Heart left ventricle (tissue), 16 donors: ENCODE measurements at regions of chr1 and their contacts with region 1.

Region 1: DNA sequence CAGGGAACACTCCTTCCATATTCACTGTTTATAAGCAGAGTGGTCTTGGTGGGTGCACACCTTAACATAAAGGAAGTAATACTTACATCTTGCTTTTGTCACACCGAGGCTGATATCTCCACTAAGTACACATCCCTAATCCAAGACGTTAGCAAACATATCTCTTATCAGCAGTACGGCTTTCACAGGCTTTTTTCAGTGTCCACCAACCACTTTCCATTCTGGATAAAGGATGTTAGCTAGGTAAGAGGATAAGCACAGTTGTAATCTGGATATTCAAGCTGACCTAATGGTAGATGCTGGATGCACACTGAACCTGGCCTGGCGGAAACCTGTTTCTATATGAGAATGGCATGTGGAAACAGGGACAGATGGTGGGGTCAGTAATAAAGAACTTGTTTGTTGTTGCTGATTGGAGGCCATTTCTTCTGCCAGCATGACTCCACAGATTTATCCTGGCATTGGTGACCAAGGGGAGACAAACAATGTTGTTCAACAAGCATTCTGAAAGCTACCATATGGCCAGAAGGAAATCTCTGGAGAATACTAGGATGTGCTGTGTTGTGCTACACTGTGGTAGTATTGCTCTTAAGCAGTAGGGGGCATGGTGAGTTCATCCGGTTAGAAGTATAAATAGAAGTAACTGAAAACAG is 416.4 kb downstream of the PTBP2 start:
- DNase-seq: peak in 4 of 5 donors; percentile 22 to 33 (median 30)
- ATAC-seq: peak; percentile 78 to 97 (median 96)
- H3K4me3 ChIP-seq: peak overlapping the region in 8 of 12 donors; percentile 17 to 49 (median 36)
- H3K27ac ChIP-seq: peak overlapping the region in 2 of 12 donors; percentile 33 to 36
- H3K4me1 ChIP-seq: peaks cover 0 to 14% (median 8%) of the 10 kb centered on the region in 12 donors
- H3K27me3 ChIP-seq: no peaks in the 10 kb centered on the region
- CTCF ChIP-seq: peak; percentile 50 to 77 (median 66)
- POLR2A ChIP-seq: no peak

Region 2: GRCh38 chr1:97314685-97315084 is 176.7 kb after region 1 on chr1:
- intact Hi-C with region 1: no loop called
- DNase-seq: no peak
- ATAC-seq: peak in 1 of 4 donors; percentile 44
- H3K4me3 ChIP-seq: no peak overlapping the region
- H3K27ac ChIP-seq: no peak overlapping the region
- H3K4me1 ChIP-seq: no peaks in the 10 kb centered on the region
- H3K27me3 ChIP-seq: no peaks in the 10 kb centered on the region
- CTCF ChIP-seq: peak in 1 of 12 donors; percentile 6
- POLR2A ChIP-seq: no peak

Region 3: DNA sequence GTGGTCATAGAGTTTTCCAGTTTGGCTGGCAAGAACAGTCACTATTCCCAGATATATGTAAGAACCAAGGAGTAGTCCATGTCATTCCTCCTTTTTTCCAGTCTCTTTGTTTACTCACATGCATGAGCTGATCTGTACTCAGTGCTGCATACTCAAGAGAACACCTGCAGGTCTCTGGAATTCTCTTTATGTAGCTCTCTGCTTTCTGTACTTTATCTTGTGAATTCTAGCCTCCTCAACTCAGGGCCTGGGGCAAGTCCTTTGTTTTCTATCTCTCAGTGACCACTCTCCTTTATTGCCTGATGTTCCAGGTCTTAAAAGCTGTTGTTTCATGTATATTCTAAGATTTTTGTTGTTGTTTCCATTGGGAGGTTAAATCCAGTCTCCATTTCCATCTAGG is 304.0 kb after region 1 on chr1:
- intact Hi-C with region 1: no loop called
- DNase-seq: no peak
- ATAC-seq: no peak
- H3K4me3 ChIP-seq: no peak overlapping the region
- H3K27ac ChIP-seq: no peak overlapping the region
- H3K4me1 ChIP-seq: no peaks in the 10 kb centered on the region
- H3K27me3 ChIP-seq: no peaks in the 10 kb centered on the region
- CTCF ChIP-seq: no peak
- POLR2A ChIP-seq: no peak

Region 4: DNA sequence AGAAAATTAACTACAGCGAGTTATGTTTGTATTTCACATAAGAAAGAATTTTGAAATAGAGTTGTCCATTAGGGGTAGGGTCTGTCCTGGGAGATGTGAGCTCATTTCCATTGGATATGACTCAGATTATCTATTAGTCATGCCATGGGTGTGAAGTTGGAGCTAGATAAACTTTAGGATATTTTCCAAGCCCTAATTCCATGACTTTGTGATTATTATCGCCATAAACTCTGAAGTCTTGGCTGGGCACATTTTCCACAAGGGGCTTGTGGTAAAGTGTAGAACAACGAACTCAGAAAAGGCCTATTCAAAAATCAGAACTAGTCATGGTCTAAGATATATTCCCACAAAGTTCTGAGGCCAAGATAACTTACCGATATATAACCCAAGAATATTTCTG is 386.2 kb after region 1 on chr1:
- intact Hi-C with region 1: loop called in 1 of 10 experiments (anchors 10 kb)
- DNase-seq: no peak
- ATAC-seq: no peak
- H3K4me3 ChIP-seq: no peak overlapping the region
- H3K27ac ChIP-seq: no peak overlapping the region
- H3K4me1 ChIP-seq: no peaks in the 10 kb centered on the region
- H3K27me3 ChIP-seq: no peaks in the 10 kb centered on the region
- CTCF ChIP-seq: no peak
- POLR2A ChIP-seq: no peak

Region 5: GRCh38 chr1:97814121-97814520 is 676.1 kb after region 1 on chr1:
- intact Hi-C with region 1: loop called in 1 of 10 experiments (anchors 10 kb)
- DNase-seq: no peak
- ATAC-seq: no peak
- H3K4me3 ChIP-seq: no peak overlapping the region
- H3K27ac ChIP-seq: no peak overlapping the region
- H3K4me1 ChIP-seq: peaks cover 0 to 3% (median 0%) of the 10 kb centered on the region in 12 donors
- H3K27me3 ChIP-seq: no peaks in the 10 kb centered on the region
- CTCF ChIP-seq: no peak
- POLR2A ChIP-seq: no peak